CD8-positive, alpha-beta memory T cell (primary cell): ENCODE measurements at regions of chr10 and their contacts with region 1.

Region 1: GRCh38 chr10:117496616-117497028 is 45.9 kb upstream of the EMX2 start:
- DNase-seq: peak; percentile 33 to 62 (median 46)
- H3K4me3 ChIP-seq: no peak overlapping the region
- H3K4me3 Mint-ChIP-seq: no peak overlapping the region
- H3K27ac ChIP-seq: no peak overlapping the region
- H3K27ac Mint-ChIP-seq: no peak overlapping the region
- H3K4me1 ChIP-seq: no peaks in the 10 kb centered on the region
- H3K4me1 Mint-ChIP-seq: peaks cover 0 to 2% (median 0%) of the 10 kb centered on the region in 3 donors
- H3K27me3 ChIP-seq: no peaks in the 10 kb centered on the region
- H3K27me3 Mint-ChIP-seq: peaks cover 10 to 33% of the 10 kb centered on the region in 2 donors

Region 2: GRCh38 chr10:118241229-118242137 is 744.9 kb after region 1 on chr10:
- CTCF ChIA-PET with region 1: interaction called, 44 read pairs
- POLR2A ChIA-PET with region 1: no interaction called
- DNase-seq: peak; percentile 26 to 71 (median 38)
- H3K4me3 ChIP-seq: no peak overlapping the region
- H3K4me3 Mint-ChIP-seq: no peak overlapping the region
- H3K27ac ChIP-seq: no peak overlapping the region
- H3K27ac Mint-ChIP-seq: no peak overlapping the region
- H3K4me1 ChIP-seq: no peaks in the 10 kb centered on the region
- H3K4me1 Mint-ChIP-seq: no peaks in the 10 kb centered on the region
- H3K27me3 ChIP-seq: peaks cover 17% of the 10 kb centered on the region
- H3K27me3 Mint-ChIP-seq: peaks cover 19 to 46% of the 10 kb centered on the region in 2 donors

Region 3: DNA sequence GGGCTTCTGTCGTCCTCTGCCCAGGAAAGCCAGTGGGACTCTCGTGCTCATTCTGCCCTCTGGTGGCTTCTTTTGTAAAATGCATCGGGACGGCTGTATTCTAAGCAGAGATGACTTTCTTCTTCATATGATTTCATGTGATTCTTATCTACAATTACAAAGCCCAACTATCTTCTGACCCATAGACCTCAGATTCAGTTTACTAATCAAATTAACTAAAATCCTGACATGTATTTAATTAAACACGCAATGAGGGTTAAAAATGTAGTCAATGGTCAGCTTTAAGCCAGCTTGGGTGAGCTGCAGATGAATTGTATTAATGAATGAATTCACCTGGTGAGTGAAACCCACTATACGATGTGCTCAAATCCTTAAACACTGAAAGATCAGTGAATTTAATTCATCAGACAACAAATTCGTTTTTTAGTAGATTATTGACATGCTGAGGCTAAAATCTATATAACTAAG is 963.1 kb after region 1 on chr10:
- CTCF ChIA-PET with region 1: interaction called, 23 read pairs
- POLR2A ChIA-PET with region 1: no interaction called
- DNase-seq: peak; percentile 5 to 51 (median 18)
- H3K4me3 ChIP-seq: peak overlapping the region; percentile 24
- H3K4me3 Mint-ChIP-seq: peak overlapping the region in 6 of 7 donors; percentile 42 to 78 (median 63)
- H3K27ac ChIP-seq: no peak overlapping the region
- H3K27ac Mint-ChIP-seq: peak overlapping the region in 1 of 8 donors; percentile 56
- H3K4me1 ChIP-seq: no peaks in the 10 kb centered on the region
- H3K4me1 Mint-ChIP-seq: peaks cover 6 to 8% (median 6%) of the 10 kb centered on the region in 3 donors
- H3K27me3 ChIP-seq: no peaks in the 10 kb centered on the region
- H3K27me3 Mint-ChIP-seq: peaks cover 20 to 65% of the 10 kb centered on the region in 2 donors